Tibial artery (tissue), 4 donors: ENCODE measurements at regions of chr1 and their contacts with region 1.

Region 1: DNA sequence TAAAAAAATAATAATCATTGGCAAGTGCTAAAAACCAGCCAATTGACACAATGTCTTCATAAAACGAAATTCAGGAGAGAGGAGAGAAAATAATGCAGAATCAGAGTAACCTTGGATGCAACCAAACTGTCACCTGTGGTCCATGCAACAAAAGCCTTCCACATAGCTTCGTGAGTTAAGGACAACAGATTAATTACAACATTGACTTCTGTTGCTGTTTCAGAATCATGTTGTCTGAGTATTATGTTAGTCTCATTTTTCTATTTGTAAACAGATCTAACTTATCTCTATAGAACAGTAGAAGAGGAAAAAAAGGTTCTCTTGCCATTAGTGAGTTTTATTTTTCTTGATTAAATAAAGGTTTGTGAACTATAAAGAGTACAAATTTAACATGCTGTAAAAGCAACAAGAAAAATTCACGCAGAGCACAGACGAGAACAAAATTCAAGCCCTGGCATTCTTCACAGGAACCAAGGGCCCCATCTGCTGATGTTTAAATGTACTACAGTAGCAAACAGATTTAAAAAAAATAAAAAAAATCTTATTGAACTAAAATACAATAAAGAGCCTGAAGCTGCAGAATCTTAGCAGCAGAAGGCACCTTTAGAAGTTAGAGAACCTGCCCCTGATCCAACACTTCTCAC is 381.1 kb upstream of the PKN2 start:
- DNase-seq: no peak
- H3K4me3 ChIP-seq: no peak overlapping the region
- H3K27ac ChIP-seq: no peak overlapping the region
- H3K4me1 ChIP-seq: no peaks in the 10 kb centered on the region
- H3K27me3 ChIP-seq: no peaks in the 10 kb centered on the region
- CTCF ChIP-seq: peak; percentile 44 to 52

Region 2: GRCh38 chr1:87295445-87296110 is 1007.4 kb before region 1 on chr1:
- intact Hi-C with region 1: loop called (anchors 5 kb)
- DNase-seq: no peak
- H3K4me3 ChIP-seq: no peak overlapping the region
- H3K27ac ChIP-seq: no peak overlapping the region
- H3K4me1 ChIP-seq: no peaks in the 10 kb centered on the region
- H3K27me3 ChIP-seq: no peaks in the 10 kb centered on the region
- CTCF ChIP-seq: no peak